H1 (cell line): ENCODE measurements at regions of chr11 and their contacts with region 1.

Region 1: GRCh38 chr11:9137293-9138132 is 46.1 kb upstream of the SCUBE2 start:
- DNase-seq: peak; percentile 73 to 95
- H3K4me3 ChIP-seq: no peak overlapping the region
- H3K27ac ChIP-seq: no peak overlapping the region
- H3K4me1 ChIP-seq: peaks cover 0 to 12% (median 2%) of the 10 kb centered on the region in 4 experiments; a peak in 3 of 7 replicates
- H3K27me3 ChIP-seq: no peaks in the 10 kb centered on the region
- CTCF ChIP-seq: peak; percentile 94 to 99 (median 96)
- EP300 ChIP-seq: no peak
- POLR2A ChIP-seq: no peak
- RAD21 ChIP-seq: peak; percentile 93 to 95

Region 2: DNA sequence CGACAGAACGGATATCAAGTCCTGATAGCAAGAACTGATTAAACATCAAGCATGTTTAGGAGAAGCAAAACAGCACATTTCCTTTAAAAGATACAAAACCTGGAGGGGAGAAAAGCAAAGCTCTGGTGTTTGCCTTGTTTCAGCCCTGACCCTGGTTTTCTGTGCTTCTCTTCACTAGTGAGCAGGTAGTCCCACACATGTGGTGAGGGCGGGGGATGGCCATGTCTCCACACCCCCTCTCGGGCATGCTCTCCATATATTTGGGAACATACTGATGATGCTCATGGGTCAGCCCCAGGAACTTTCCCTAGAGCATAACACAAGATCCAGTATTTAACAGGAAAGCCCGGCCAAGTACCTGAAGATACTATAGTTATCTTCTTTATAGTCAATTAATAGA is 214.8 kb before region 1 on chr11:
- CTCF ChIA-PET with region 1: no interaction called
- POLR2A ChIA-PET with region 1: no interaction called
- DNase-seq: no peak
- H3K4me3 ChIP-seq: no peak overlapping the region
- H3K27ac ChIP-seq: no peak overlapping the region
- H3K4me1 ChIP-seq: no peaks in the 10 kb centered on the region
- H3K27me3 ChIP-seq: no peaks in the 10 kb centered on the region
- CTCF ChIP-seq: no peak
- EP300 ChIP-seq: no peak
- POLR2A ChIP-seq: no peak
- RAD21 ChIP-seq: no peak

Region 3: GRCh38 chr11:9047964-9048523 is 89.5 kb before region 1 on chr11:
- CTCF ChIA-PET with region 1: interaction called, 13 read pairs
- POLR2A ChIA-PET with region 1: no interaction called
- DNase-seq: no peak
- H3K4me3 ChIP-seq: no peak overlapping the region
- H3K27ac ChIP-seq: no peak overlapping the region
- H3K4me1 ChIP-seq: peaks cover 0 to 10% (median 2%) of the 10 kb centered on the region in 4 experiments; a peak in 5 of 7 replicates
- H3K27me3 ChIP-seq: no peaks in the 10 kb centered on the region
- CTCF ChIP-seq: no peak
- EP300 ChIP-seq: no peak
- POLR2A ChIP-seq: no peak
- RAD21 ChIP-seq: no peak

Region 4: DNA sequence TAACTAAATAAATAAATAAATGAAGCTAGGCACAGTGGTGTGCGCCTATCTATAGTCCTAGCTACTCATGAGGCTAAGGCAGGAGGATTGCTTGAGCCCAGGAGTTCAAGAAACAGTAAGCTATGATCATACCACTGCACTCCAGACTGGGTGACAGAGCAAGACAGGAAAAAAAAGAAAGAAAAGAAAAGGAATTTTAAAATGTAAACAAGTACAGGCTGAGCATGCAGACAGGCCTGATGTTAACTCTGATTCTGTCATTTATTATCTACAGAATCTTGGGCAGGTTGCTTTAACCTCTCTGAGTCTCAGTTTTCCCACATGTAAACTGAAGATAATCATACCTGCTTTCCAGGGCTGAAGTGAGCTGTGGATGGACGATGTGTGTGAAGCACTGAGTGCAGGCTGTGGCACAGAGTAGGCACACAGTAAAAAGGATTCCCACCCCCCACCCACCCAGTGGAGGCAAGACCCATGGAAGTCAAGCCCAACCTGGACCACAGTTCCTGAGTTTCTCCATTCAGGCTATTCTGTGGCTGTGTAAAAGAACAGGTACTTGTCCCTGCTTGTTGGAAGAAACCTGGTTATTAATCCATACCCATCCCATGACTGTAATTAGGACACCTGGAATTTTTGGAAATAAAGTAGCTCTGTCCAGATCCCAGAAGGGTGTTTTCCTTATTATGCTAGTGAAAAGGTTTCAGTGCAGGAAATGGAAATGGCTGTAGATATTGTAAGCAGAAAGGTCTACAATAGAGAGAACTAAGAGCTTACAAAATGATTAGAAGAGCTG is 27.4 kb before region 1 on chr11:
- CTCF ChIA-PET with region 1: interaction called, 13 read pairs
- POLR2A ChIA-PET with region 1: no interaction called
- DNase-seq: no peak
- H3K4me3 ChIP-seq: no peak overlapping the region
- H3K27ac ChIP-seq: no peak overlapping the region
- H3K4me1 ChIP-seq: no peaks in the 10 kb centered on the region
- H3K27me3 ChIP-seq: no peaks in the 10 kb centered on the region
- CTCF ChIP-seq: no peak
- EP300 ChIP-seq: no peak
- POLR2A ChIP-seq: no peak
- RAD21 ChIP-seq: no peak

Region 5: GRCh38 chr11:9150501-9150900 is 13.0 kb after region 1 on chr11:
- CTCF ChIA-PET with region 1: interaction called, 38 read pairs
- POLR2A ChIA-PET with region 1: no interaction called
- DNase-seq: peak in 1 of 2 experiments; percentile 3
- H3K4me3 ChIP-seq: no peak overlapping the region
- H3K27ac ChIP-seq: no peak overlapping the region
- H3K4me1 ChIP-seq: no peaks in the 10 kb centered on the region
- H3K27me3 ChIP-seq: no peaks in the 10 kb centered on the region
- CTCF ChIP-seq: no peak
- EP300 ChIP-seq: no peak
- POLR2A ChIP-seq: no peak
- RAD21 ChIP-seq: no peak